ENCODE measurements at regions of chr17 and their contacts with region 1.

Region 1: DNA sequence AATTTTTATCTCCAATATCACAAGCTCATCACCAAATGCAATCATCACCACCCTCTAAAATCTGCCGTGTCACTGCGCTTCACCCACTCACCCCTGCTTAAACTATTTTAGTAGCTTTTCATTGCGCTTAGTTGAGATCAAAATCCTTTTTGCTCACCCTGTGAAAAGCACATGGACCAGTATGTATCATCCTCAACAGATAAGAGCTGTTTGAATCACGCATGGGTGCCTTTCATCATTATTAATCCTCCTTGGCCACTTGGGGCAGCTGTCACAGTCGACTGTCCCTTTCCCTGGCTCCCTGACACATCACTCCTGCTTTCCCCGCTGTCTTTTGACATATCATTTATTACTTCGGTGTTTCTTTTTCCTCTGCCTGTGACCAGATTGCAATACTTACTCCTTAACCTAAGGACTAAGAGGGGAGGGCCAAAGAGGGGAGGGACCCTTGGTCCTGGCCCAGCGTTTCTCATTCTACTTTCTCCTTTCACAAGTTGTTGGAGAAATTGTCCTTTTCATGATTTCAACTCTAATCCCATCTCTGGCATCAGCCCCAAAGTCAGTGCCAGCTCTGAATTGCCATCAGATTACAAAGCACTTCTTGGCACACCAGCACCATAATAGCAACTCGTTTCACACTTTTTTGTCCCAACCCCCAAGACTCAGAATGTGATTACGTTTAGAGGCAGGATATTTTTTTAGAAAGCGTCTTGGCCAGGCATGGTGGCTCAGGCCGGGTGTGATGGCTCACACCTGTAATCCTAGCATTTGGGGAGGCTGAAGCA is 8.6 kb upstream of the KDM6B start:
- DNase-seq: no peak
- ATAC-seq: peak; percentile 35
- H3K4me3 ChIP-seq: no peak overlapping the region
- H3K27ac ChIP-seq: no peak overlapping the region
- H3K4me1 ChIP-seq: no peaks in the 10 kb centered on the region; the same call in 1 of the 2 replicates
- H3K27me3 ChIP-seq: peaks cover 13% of the 10 kb centered on the region
- CTCF ChIP-seq: no peak
- POLR2A ChIP-seq: no peak
- RAD21 ChIP-seq: peak; percentile 21; the same call in 1 of the 2 replicates

Region 2: DNA sequence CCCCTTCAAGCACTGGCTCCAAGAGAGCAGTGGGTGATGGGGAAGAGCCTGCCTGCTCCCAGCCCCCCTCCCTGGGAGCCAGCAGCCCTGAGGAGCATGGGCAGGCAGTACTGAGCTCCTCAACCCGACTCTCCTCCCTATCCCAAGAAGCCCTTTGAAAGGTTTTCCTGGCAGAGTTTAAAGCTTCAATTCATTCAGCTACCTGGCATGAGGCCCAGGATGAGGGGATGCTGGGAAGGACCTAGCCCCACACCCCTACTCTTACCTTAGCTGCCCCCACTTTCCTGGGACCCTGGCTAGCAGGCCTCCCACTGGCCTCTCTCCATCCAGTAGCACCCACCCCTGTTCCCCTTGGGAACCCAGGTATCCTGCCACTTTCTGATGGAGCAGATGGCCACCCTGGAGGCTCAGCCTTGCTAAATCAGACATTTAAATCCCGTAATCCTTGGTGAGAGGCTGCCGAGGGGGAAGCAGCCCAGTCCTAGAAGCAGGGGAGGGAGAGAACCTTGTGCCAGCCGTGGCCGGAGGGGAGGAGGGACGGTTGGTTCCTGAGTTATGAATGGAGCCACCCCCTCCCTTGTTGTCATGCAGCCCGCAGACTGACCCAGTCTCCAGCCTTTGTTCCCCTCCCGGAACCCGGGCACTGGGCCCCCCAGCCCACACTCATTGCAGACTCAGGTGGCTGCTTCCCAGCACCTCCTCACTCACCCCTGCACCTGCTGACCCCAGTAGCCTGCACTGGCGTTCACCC is 157.6 kb before region 1 on chr17:
- CTCF ChIA-PET with region 1: no interaction called
- POLR2A ChIA-PET with region 1: no interaction called
- dilution Hi-C with region 1: no loop called
- in situ Hi-C with region 1: no loop called
- intact Hi-C with region 1: no loop called
- DNase-seq: no peak
- ATAC-seq: no peak
- H3K4me3 ChIP-seq: no peak overlapping the region
- H3K27ac ChIP-seq: no peak overlapping the region
- H3K4me1 ChIP-seq: no peaks in the 10 kb centered on the region
- H3K27me3 ChIP-seq: no peaks in the 10 kb centered on the region
- CTCF ChIP-seq: no peak
- POLR2A ChIP-seq: no peak
- RAD21 ChIP-seq: no peak

Region 3: DNA sequence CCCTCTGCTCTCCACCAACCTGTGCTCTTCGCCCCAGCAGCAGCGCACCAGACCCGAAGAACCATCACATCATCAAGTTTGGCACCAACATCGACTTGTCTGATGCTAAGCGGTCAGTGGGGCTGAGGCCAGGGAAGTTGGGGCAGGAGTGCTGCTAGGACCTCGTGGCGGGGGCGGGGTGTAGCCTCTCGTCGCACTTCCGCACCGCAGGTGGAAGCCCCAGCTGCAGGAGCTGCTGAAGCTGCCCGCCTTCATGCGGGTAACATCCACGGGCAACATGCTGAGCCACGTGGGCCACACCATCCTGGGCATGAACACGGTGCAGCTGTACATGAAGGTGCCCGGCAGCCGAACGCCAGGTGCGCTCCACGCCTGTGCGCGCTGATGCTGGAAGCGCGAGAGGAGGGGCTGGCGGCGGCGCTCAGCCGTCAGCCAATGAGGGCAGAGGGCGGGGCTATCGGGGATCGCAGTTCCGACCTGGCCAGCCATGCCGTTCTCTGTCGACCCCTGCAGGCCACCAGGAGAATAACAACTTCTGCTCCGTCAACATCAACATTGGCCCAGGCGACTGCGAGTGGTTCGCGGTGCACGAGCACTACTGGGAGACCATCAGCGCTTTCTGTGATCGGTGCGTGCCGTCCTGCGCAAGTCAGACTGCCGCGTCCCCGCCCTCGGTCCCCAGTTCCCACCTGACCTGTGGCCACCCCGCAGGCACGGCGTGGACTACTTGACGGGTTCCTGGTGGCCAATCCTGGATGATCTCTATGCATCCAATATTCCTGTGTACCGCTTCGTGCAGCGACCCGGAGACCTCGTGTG is 26.2 kb after region 1 on chr17:
- CTCF ChIA-PET with region 1: no interaction called
- POLR2A ChIA-PET with region 1: no interaction called
- dilution Hi-C with region 1: no loop called
- in situ Hi-C with region 1: no loop called
- intact Hi-C with region 1: loop called (anchors 1 kb)
- DNase-seq: peak; percentile 81
- ATAC-seq: peak; percentile 89
- H3K4me3 ChIP-seq: no peak overlapping the region
- H3K27ac ChIP-seq: no peak overlapping the region
- H3K4me1 ChIP-seq: peaks cover 15% of the 10 kb centered on the region
- H3K27me3 ChIP-seq: no peaks in the 10 kb centered on the region
- CTCF ChIP-seq: peak; percentile 95
- POLR2A ChIP-seq: peak; percentile 62
- RAD21 ChIP-seq: peak; percentile 89

Region 4: GRCh38 chr17:7897773-7898172 is 72.4 kb after region 1 on chr17:
- CTCF ChIA-PET with region 1: no interaction called
- POLR2A ChIA-PET with region 1: no interaction called
- dilution Hi-C with region 1: no loop called
- in situ Hi-C with region 1: no loop called
- intact Hi-C with region 1: loop called (anchors 5 kb)
- DNase-seq: peak; percentile 77
- ATAC-seq: peak; percentile 90
- H3K4me3 ChIP-seq: no peak overlapping the region
- H3K27ac ChIP-seq: no peak overlapping the region
- H3K4me1 ChIP-seq: no peaks in the 10 kb centered on the region
- H3K27me3 ChIP-seq: no peaks in the 10 kb centered on the region
- CTCF ChIP-seq: peak; percentile 77
- POLR2A ChIP-seq: no peak
- RAD21 ChIP-seq: peak; percentile 88

Region 5: GRCh38 chr17:7915611-7916382 is 90.4 kb after region 1 on chr17 and contains the start of gene RNF227:
- CTCF ChIA-PET with region 1: no interaction called
- POLR2A ChIA-PET with region 1: interaction called, 11 read pairs
- dilution Hi-C with region 1: no loop called
- in situ Hi-C with region 1: no loop called
- intact Hi-C with region 1: no loop called
- DNase-seq: peak; percentile 96
- ATAC-seq: peak; percentile 84
- H3K4me3 ChIP-seq: peak within 1 kb of the TSS; percentile 61
- H3K27ac ChIP-seq: peak within 1 kb of the TSS; percentile 90
- H3K4me1 ChIP-seq: peaks cover 12% of the 10 kb centered on the region
- H3K27me3 ChIP-seq: no peaks in the 10 kb centered on the region
- CTCF ChIP-seq: no peak
- POLR2A ChIP-seq: peak; percentile 71
- RAD21 ChIP-seq: no peak
- total RNA-seq, gene RNF227: 1.3 and 1.4 TPM in 2 replicates

Region 6: GRCh38 chr17:7956228-7956965 is 131.0 kb after region 1 on chr17:
- CTCF ChIA-PET with region 1: no interaction called
- POLR2A ChIA-PET with region 1: no interaction called
- dilution Hi-C with region 1: no loop called
- in situ Hi-C with region 1: no loop called
- intact Hi-C with region 1: no loop called
- DNase-seq: peak; percentile 12
- ATAC-seq: no peak
- H3K4me3 ChIP-seq: no peak overlapping the region
- H3K27ac ChIP-seq: no peak overlapping the region
- H3K4me1 ChIP-seq: no peaks in the 10 kb centered on the region
- H3K27me3 ChIP-seq: peaks cover 4% of the 10 kb centered on the region
- CTCF ChIP-seq: no peak
- POLR2A ChIP-seq: no peak
- RAD21 ChIP-seq: no peak